Prostate gland (tissue), 2 donors: ENCODE measurements at regions of chr3 and their contacts with region 1.

Region 1: DNA sequence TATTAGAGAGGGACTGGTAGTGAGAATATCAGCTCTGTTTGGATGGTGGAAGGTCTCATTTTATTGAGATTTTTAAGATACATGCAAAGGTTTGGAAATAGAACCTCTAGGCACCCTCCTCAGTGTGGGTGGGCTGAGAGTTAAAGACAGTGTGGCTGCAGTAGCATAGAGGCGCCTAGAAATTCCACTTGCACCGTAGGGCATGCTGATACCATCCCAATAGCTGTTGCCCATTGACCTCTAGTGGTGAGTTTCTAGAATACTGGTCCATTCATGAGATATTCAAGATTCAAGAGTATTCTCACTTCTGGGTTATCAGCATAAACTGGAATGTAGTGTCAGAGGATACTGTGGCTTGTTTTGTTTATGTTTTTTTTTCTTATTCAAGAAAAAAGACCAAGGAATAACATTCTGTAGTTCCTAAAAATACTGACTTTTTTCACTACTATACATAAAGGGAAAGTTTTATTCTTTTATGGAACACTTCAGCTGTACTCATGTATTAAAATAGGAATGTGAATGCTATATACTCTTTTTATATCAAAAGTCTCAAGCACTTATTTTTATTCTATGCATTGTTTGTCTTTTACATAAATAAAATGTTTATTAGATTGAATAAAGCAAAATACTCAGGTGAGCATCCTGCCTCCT is 87.2 kb downstream of the TGFBR2 start:
- DNase-seq: peak; percentile 53
- H3K4me3 ChIP-seq: no peak overlapping the region
- H3K27ac ChIP-seq: no peak overlapping the region
- H3K4me1 ChIP-seq: peaks cover 6% of the 10 kb centered on the region
- H3K27me3 ChIP-seq: no peaks in the 10 kb centered on the region
- CTCF ChIP-seq: peak; percentile 62 to 83 (median 78)
- POLR2A ChIP-seq: no peak

Region 2: DNA sequence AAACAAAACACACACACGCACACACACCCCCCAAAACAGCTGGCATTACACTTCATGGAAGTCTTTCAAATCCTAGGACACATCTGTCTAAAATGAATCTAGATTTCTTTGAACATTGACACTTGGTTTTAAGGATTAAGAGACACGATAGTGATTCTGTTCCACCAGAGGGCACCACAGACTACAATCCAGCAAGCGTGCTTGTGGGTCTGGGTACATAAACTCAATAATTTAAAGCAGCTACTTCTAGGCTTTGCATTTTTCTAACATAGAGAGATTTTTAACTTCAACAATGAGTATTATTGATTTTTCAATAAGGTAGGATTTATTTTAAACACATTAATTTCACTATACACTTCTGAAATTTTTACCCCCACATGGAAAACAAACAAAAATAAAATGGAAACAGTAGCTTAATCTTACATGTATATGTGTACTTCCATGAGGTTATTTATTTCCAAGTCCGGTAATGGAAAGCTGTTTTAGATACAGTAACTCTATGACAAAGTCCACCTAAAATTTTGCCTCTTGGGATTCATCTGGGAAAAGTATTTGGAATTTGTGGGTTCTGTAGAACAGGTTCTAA is 651.2 kb before region 1 on chr3:
- intact Hi-C with region 1: loop called (anchors 5 kb)
- DNase-seq: peak; percentile 49
- H3K4me3 ChIP-seq: no peak overlapping the region
- H3K27ac ChIP-seq: no peak overlapping the region
- H3K4me1 ChIP-seq: no peaks in the 10 kb centered on the region
- H3K27me3 ChIP-seq: no peaks in the 10 kb centered on the region
- CTCF ChIP-seq: peak; percentile 37 to 71 (median 62)
- POLR2A ChIP-seq: no peak

Region 3: GRCh38 chr3:30112902-30113484 is 580.6 kb before region 1 on chr3:
- intact Hi-C with region 1: loop called (anchors 2 kb)
- DNase-seq: no peak
- H3K4me3 ChIP-seq: no peak overlapping the region
- H3K27ac ChIP-seq: no peak overlapping the region
- H3K4me1 ChIP-seq: no peaks in the 10 kb centered on the region
- H3K27me3 ChIP-seq: no peaks in the 10 kb centered on the region
- CTCF ChIP-seq: peak; percentile 39 to 74 (median 62)
- POLR2A ChIP-seq: no peak

Region 4: GRCh38 chr3:30199096-30199759 is 494.4 kb before region 1 on chr3:
- intact Hi-C with region 1: loop called (anchors 5 kb)
- DNase-seq: peak; percentile 54
- H3K4me3 ChIP-seq: no peak overlapping the region
- H3K27ac ChIP-seq: no peak overlapping the region
- H3K4me1 ChIP-seq: no peaks in the 10 kb centered on the region
- H3K27me3 ChIP-seq: no peaks in the 10 kb centered on the region
- CTCF ChIP-seq: peak; percentile 69 to 82 (median 76)
- POLR2A ChIP-seq: no peak

Region 5: GRCh38 chr3:30518181-30518864 is 175.3 kb before region 1 on chr3:
- intact Hi-C with region 1: loop called (anchors 5 kb)
- DNase-seq: peak; percentile 91
- H3K4me3 ChIP-seq: no peak overlapping the region
- H3K27ac ChIP-seq: peak overlapping the region; percentile 46 to 50
- H3K4me1 ChIP-seq: no peaks in the 10 kb centered on the region
- H3K27me3 ChIP-seq: no peaks in the 10 kb centered on the region
- CTCF ChIP-seq: peak in 1 of 4 experiments; percentile 24
- POLR2A ChIP-seq: no peak